Activated naive CD4-positive, alpha-beta T cell treated with anti-CD3 and anti-CD28 coated beads for 36 hours (primary cell): ENCODE measurements at regions of chr22 and their contacts with region 1.

Region 1: DNA sequence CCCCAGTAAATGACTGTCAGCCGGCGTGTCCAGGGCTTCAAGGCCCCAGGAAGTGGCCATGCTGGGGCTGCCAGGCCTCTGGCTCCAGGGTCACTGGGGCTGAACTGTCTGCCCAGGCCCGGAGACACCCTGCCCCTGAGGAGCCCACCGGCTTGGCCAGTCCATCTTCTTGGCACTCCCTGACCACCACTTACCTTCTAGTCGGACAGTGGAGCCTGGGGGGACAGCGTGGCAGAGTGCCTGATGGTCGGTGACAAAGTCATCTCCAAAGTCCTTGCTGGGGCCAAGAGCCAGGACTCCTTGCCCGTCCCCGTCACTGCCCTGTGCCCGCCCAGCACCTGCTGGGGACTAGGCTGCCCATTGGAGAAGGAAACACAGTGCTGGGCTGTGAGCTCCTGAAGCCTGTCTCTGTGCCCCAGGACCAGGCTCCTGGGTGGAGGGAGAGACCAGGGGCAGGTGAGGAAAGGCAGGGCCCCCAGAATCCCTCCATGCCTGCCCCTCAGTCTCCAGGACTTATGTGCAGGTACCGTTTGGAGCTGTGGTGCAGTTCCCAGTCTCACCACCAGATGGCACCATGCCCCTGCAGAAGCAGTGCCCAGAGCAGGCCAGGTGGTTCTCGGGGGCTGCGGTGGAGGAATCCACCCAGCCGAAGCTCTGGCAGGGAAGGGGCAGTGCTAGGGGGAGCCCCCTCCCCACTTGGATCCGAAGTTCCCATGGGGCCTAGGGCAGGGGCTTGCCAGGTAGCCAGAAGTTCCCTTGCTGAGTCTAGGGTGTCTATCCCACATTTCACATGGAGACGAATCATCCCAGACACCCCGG is 6.0 kb upstream of the CCDC188 start:
- DNase-seq: peak; percentile 90
- H3K4me3 Mint-ChIP-seq: no peak overlapping the region
- H3K27ac Mint-ChIP-seq: no peak overlapping the region
- H3K4me1 Mint-ChIP-seq: no peaks in the 10 kb centered on the region
- H3K27me3 Mint-ChIP-seq: peaks cover 3% of the 10 kb centered on the region

Region 2: GRCh38 chr22:20238536-20238900 is 81.7 kb after region 1 on chr22:
- CTCF ChIA-PET with region 1: interaction called, 13 read pairs
- intact Hi-C with region 1: loop called (anchors 1 kb)
- DNase-seq: peak; percentile 81
- H3K4me3 Mint-ChIP-seq: no peak overlapping the region
- H3K27ac Mint-ChIP-seq: peak overlapping the region; percentile 36
- H3K4me1 Mint-ChIP-seq: peaks cover 18% of the 10 kb centered on the region
- H3K27me3 Mint-ChIP-seq: no peaks in the 10 kb centered on the region

Region 3: GRCh38 chr22:20268279-20269012 is 111.6 kb after region 1 on chr22 and contains the start of gene RTN4R:
- CTCF ChIA-PET with region 1: interaction called, 3 read pairs
- intact Hi-C with region 1: loop called (anchors 1 kb)
- DNase-seq: peak; percentile 65
- H3K4me3 Mint-ChIP-seq: peak within 1 kb of the TSS; percentile 66
- H3K27ac Mint-ChIP-seq: no peak within 1 kb of the TSS
- H3K4me1 Mint-ChIP-seq: peaks cover 4% of the 10 kb centered on the region
- H3K27me3 Mint-ChIP-seq: no peaks in the 10 kb centered on the region
- total RNA-seq, gene RTN4R: 2.1 to 2.5 TPM

Region 4: DNA sequence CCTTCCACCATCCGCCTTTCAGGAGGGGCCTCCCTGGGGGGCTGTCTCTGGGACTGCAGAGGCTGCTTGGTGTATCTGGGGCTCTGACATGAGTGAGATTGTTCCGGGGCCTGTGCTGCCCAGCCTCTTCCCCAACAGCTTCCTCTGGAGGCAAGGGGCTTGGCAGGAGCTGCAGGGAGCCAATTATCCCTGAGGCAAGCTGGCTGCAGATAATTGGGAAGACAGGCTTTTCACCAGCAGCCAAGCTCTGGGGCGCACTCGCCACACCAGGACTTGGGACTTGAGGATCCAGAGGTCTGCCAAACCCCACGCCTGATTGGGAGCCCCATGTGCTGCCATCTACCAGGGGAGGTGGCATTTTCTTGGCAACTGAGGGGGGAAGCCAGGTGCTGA is 126.8 kb after region 1 on chr22:
- CTCF ChIA-PET with region 1: interaction called, 9 read pairs
- intact Hi-C with region 1: loop called (anchors 1 kb)
- DNase-seq: no peak
- H3K4me3 Mint-ChIP-seq: no peak overlapping the region
- H3K27ac Mint-ChIP-seq: no peak overlapping the region
- H3K4me1 Mint-ChIP-seq: no peaks in the 10 kb centered on the region
- H3K27me3 Mint-ChIP-seq: no peaks in the 10 kb centered on the region

Region 5: DNA sequence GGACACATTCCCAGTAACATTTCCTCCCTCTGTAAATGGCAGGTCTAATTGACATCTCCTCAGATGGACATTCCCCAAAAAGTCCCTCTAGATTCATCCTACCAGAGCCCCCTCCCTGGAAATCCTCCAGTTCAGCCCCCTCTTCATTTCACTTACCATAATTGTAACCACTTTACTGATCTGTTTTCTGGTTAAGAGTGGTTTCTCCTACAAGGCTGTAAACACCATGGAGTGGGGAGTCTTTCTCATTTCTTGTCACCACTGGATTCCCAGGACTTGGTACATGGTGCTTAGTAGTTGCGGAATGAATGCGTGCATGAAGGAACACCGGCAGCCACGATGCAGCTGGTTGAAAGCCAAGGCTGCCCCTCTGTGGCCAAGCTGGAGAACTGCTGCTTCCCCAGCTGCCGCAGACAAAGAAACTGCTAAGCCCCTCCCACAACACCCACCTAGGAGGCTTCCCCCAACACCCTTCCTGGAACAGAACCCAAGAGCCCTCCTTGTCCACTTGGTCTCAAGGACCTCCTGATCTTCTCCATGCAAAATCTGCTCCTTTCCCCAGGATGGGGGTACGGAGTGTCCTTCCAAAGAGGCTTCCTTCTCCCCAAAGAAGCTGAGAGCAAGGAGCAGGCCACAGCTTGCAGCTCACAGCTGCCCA is 299.4 kb after region 1 on chr22:
- CTCF ChIA-PET with region 1: interaction called, 6 read pairs
- intact Hi-C with region 1: loop called (anchors 2 kb)
- DNase-seq: peak; percentile 84
- H3K4me3 Mint-ChIP-seq: no peak overlapping the region
- H3K27ac Mint-ChIP-seq: no peak overlapping the region
- H3K4me1 Mint-ChIP-seq: peaks cover 23% of the 10 kb centered on the region
- H3K27me3 Mint-ChIP-seq: no peaks in the 10 kb centered on the region